Breast epithelium (tissue), 4 donors: ENCODE measurements at regions of chr14 and their contacts with region 1.

Region 1: GRCh38 chr14:71438684-71439083 is 493.5 kb upstream of the RGS6 start:
- DNase-seq: peak in 1 of 2 donors; percentile 41
- H3K4me3 ChIP-seq: no peak overlapping the region
- H3K27ac ChIP-seq: peak overlapping the region; percentile 46 to 60
- H3K4me1 ChIP-seq: peaks cover 0 to 3% of the 10 kb centered on the region in 2 donors
- H3K27me3 ChIP-seq: no peaks in the 10 kb centered on the region
- CTCF ChIP-seq: no peak
- POLR2A ChIP-seq: no peak

Region 2: DNA sequence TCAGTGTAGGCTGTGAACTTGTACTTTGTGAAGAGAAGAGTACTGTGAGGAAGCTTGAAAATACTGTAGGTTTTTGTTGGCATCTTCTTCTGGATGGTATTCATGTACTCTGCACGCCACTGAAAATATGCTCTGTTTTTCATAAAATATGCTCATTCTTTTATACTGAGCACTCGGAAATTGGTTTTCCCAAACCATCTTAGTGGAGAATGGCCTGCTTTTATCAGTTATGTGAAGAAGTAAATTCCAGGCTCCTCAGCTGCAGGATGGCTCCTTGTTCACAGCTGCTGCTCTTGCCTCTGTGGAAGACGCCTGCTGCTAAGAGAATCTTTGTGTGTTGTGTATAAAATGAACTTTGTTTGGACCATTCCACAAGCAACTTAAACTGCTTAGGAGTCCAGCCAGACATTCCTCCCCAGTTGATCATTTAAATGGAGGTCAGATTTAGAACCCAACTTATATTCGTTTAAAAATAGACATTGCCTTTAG is 50.1 kb after region 1 on chr14:
- intact Hi-C with region 1: loop called (anchors 5 kb)
- DNase-seq: no peak
- H3K4me3 ChIP-seq: no peak overlapping the region
- H3K27ac ChIP-seq: no peak overlapping the region
- H3K4me1 ChIP-seq: no peaks in the 10 kb centered on the region
- H3K27me3 ChIP-seq: no peaks in the 10 kb centered on the region
- CTCF ChIP-seq: no peak
- POLR2A ChIP-seq: no peak

Region 3: GRCh38 chr14:71508901-71509300 is 70.2 kb after region 1 on chr14:
- intact Hi-C with region 1: no loop called
- DNase-seq: no peak
- H3K4me3 ChIP-seq: no peak overlapping the region
- H3K27ac ChIP-seq: no peak overlapping the region
- H3K4me1 ChIP-seq: no peaks in the 10 kb centered on the region
- H3K27me3 ChIP-seq: no peaks in the 10 kb centered on the region
- CTCF ChIP-seq: no peak
- POLR2A ChIP-seq: no peak

Region 4: DNA sequence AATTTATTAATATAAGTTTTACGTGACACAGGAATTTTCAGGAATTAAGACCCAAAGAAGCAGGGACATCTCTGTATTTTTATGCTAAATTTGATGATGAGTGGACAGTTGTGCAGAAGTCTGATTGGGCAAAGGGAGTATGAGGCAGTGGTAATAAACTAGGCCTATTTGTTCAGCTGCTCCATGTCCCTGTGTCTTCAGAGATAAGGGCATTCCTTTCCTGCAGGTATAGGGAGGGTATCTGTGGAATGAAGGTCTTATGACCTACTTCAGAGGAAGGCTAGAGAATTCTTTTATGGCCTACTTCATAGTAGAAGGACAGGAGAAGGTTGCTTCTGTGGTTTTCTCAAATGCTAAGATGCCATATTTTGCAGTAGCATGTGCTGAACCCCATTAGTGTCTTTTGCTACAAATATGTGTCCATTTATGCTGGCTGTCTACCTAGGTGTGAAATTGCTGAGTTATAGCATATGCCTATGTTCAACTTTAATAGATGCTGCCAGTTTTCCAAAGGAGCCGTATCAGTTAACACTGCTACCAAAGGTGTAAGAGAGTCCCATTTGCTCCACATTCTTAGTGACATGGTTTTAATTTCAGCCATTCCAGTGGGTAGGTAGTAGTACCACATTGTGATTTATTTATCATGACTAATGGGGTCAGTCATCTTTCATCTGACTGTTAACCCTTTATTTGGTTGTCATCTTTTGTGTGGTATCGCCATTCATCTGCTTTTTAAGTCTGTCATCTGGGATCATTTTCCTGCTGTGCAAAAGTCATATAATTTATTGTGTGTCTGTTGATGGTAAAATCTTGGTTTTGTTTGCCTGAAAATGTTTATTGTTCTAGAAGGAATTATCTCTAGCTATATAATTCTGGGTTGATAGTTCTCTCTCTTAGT is 82.8 kb after region 1 on chr14:
- intact Hi-C with region 1: loop called (anchors 2 kb)
- DNase-seq: no peak
- H3K4me3 ChIP-seq: no peak overlapping the region
- H3K27ac ChIP-seq: no peak overlapping the region
- H3K4me1 ChIP-seq: no peaks in the 10 kb centered on the region
- H3K27me3 ChIP-seq: no peaks in the 10 kb centered on the region
- CTCF ChIP-seq: no peak
- POLR2A ChIP-seq: no peak

Region 5: DNA sequence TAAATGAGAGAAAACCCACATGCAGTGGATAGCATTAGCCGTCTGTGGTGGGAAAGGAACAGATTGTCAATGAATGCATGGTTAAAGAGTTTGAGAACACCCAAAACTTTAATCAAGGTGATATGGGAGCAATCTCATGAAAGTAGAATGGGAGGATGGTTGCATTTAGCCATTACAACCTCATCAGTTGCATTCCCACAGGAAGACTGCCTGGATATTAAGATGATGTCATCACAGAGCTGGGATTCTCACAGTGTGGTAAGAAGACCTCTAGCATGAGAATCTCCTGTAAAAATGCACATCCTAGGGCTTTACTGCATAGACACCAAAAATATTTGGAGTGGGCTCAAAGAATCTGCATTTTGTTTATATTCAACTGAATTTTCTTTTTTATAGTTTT is 778.5 kb after region 1 on chr14:
- intact Hi-C with region 1: no loop called
- DNase-seq: no peak
- H3K4me3 ChIP-seq: no peak overlapping the region
- H3K27ac ChIP-seq: no peak overlapping the region
- H3K4me1 ChIP-seq: no peaks in the 10 kb centered on the region
- H3K27me3 ChIP-seq: no peaks in the 10 kb centered on the region
- CTCF ChIP-seq: no peak
- POLR2A ChIP-seq: no peak